Posterior cingulate gyrus (tissue), 11 donors: ENCODE measurements at regions of chr4 and their contacts with region 1.

Region 1: GRCh38 chr4:184263910-184264732 is 46.4 kb upstream of the ENPP6 start:
- DNase-seq: peak; percentile 83 to 98 (median 96)

Region 2: GRCh38 chr4:184343502-184344177 is 79.5 kb after region 1 on chr4:
- intact Hi-C with region 1: loop called (anchors 10 kb)
- DNase-seq: peak; percentile 60 to 96 (median 79)

Region 3: DNA sequence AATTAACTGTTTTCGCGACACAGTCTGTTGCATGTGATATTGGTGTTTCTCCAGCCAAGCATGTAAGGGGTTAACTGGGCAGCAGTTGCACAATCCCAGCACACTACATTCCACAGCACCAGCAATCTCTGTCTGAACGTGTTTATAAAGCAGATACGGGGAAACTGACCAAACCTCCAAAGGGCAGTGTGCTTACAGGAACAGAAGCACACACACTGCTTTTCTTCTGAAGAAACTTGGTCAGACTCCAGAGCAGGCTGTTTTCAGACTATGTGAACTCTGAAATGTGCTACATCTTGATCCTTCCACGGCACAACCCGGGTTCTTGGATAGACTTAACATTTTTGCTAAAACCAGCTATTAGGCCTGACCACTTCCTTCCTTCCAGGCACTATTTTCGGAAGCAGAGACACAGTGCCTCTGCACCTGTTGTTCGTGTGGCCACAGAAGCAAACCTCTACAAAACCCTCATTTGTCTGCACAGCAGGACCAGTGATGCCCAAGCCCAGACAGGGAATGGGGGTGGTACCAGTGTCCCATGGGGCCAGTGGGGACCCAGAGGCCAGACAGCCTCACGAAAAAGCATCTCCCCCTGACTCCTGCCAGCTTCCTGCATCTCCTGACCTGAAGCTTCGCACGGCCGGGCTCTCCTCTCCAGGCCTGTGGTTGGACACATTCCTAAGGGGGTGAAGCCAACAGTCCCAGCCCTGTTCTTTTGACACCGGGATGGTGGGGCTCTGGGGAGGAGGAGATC is 120.1 kb after region 1 on chr4:
- intact Hi-C with region 1: loop called (anchors 10 kb)
- DNase-seq: no peak

Region 4: GRCh38 chr4:184538023-184538599 is 274.0 kb after region 1 on chr4:
- intact Hi-C with region 1: loop called (anchors 1 kb)
- DNase-seq: peak; percentile 74 to 96 (median 82)

Region 5: GRCh38 chr4:184649026-184649970 is 385.2 kb after region 1 on chr4 and contains the starts of genes CASP3 and PRIMPOL:
- intact Hi-C with region 1: loop called (anchors 5 kb)
- DNase-seq: peak; percentile 94 to 99 (median 96)